Activated naive CD4-positive, alpha-beta T cell treated with anti-CD3 and anti-CD28 coated beads for 36 hours (primary cell): ENCODE measurements at regions of chr7 and their contacts with region 1.

Region 1: GRCh38 chr7:28921822-28922221 is 36.3 kb downstream of the TRIL start:
- DNase-seq: peak; percentile 49
- H3K4me3 Mint-ChIP-seq: no peak overlapping the region
- H3K27ac Mint-ChIP-seq: no peak overlapping the region
- H3K4me1 Mint-ChIP-seq: peaks cover 15% of the 10 kb centered on the region
- H3K27me3 Mint-ChIP-seq: no peaks in the 10 kb centered on the region

Region 2: DNA sequence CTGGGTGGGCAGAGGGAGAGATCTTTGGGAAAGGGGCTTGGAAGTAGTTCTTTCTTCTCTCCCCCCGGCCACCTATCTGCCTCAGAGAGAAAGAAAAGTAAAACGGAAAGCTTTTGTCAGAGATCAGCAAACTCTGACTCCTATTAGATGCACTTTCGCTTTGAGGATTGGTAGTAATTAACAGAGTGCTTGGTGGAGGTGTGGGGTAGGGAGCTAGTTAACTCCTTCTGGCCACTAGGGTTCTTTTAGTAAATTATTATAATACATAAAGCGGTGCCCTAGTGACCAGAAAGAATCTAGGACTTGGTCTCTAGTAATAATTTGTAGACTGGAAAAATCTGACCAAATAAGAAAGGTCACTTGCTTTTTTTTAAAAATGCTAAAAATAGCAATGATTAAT is 169.9 kb after region 1 on chr7:
- CTCF ChIA-PET with region 1: interaction called, 45 read pairs
- intact Hi-C with region 1: no loop called
- DNase-seq: peak; percentile 21
- H3K4me3 Mint-ChIP-seq: peak overlapping the region; percentile 78
- H3K27ac Mint-ChIP-seq: peak overlapping the region; percentile 86
- H3K4me1 Mint-ChIP-seq: peaks cover 13% of the 10 kb centered on the region
- H3K27me3 Mint-ChIP-seq: peaks cover 3% of the 10 kb centered on the region

Region 3: DNA sequence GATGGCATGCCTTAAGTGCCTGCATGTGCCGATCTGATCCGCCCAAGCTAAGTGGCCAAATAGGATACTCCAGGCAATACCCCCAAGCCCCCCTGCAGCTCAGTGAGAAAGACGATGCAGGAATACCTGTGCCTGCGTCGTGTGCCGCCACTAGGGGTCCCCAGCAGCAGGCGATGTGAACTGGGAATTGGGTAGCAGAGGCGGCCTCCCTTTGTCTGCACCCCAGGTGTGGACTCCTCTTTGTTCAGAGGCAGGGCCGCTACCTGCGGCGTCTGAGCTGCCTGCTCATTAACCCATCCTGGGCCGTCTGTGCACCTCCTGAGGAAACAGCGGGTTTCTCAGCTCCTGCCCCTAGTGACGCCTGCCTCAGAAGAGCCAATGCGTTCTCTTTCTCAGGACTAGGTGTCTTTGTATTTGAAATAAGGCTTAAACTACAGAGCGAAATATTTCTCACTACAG is 267.9 kb after region 1 on chr7:
- CTCF ChIA-PET with region 1: interaction called, 14 read pairs
- intact Hi-C with region 1: loop called (anchors 2 kb)
- DNase-seq: peak; percentile 63
- H3K4me3 Mint-ChIP-seq: no peak overlapping the region
- H3K27ac Mint-ChIP-seq: no peak overlapping the region
- H3K4me1 Mint-ChIP-seq: peaks cover 4% of the 10 kb centered on the region
- H3K27me3 Mint-ChIP-seq: peaks cover 30% of the 10 kb centered on the region

Region 4: GRCh38 chr7:29408841-29409243 is 487.0 kb after region 1 on chr7:
- CTCF ChIA-PET with region 1: interaction called, 93 read pairs
- intact Hi-C with region 1: loop called (anchors 1 kb)
- DNase-seq: peak; percentile 70
- H3K4me3 Mint-ChIP-seq: no peak overlapping the region
- H3K27ac Mint-ChIP-seq: no peak overlapping the region
- H3K4me1 Mint-ChIP-seq: no peaks in the 10 kb centered on the region
- H3K27me3 Mint-ChIP-seq: no peaks in the 10 kb centered on the region